Left ventricle myocardium inferior (tissue), 1 donor: ENCODE measurements at regions of chr1 and their contacts with region 1.

Region 1: GRCh38 chr1:205273551-205273982 is 45.8 kb downstream of the TMCC2 start:
- DNase-seq: peak; percentile 83
- H3K4me3 ChIP-seq: no peak overlapping the region
- H3K27ac ChIP-seq: no peak overlapping the region
- H3K4me1 ChIP-seq: peaks cover 35% of the 10 kb centered on the region
- H3K27me3 ChIP-seq: no peaks in the 10 kb centered on the region
- CTCF ChIP-seq: peak; percentile 100

Region 2: DNA sequence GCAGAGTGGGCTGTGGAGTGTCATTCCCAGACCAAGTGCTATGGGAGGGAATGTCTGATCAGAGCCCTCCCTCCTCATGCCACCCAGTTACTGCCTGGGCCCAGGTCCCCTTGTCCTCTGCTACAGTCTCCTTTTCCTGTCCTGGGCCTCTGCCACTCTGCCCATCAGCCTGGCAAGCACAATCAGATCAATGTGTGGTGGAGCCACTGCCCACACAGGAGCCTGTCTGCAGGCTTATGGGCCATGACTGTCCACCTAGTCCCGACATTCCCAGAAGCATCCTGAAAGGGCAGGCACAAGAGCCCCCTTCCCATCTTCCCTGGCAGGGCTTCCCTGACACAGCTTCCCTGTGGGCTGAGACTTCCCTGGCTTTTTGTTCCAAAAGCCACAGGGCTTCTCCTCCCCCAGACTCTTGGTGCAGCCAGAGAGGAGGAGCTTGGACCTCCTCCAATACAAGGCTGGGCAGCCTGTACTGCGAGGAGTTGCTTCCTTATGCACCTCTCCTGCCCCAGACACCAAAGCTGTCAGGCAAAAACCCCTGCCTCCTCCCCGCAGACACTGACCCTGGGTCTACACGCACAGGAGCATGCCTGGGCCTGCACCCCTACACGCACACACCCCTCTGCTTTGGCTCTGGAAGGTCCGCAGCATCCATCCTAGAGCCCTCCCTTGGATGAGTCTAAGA is 259.7 kb before region 1 on chr1:
- intact Hi-C with region 1: no loop called
- DNase-seq: peak; percentile 35
- H3K4me3 ChIP-seq: no peak overlapping the region
- H3K27ac ChIP-seq: no peak overlapping the region
- H3K4me1 ChIP-seq: peaks cover 12% of the 10 kb centered on the region
- H3K27me3 ChIP-seq: peaks cover 25% of the 10 kb centered on the region
- CTCF ChIP-seq: no peak

Region 3: GRCh38 chr1:205211169-205211838 is 62.3 kb before region 1 on chr1 and contains the start of gene DSTYK:
- intact Hi-C with region 1: no loop called
- DNase-seq: peak; percentile 93
- H3K4me3 ChIP-seq: peak within 1 kb of the TSS; percentile 99
- H3K27ac ChIP-seq: peak within 1 kb of the TSS; percentile 97
- H3K4me1 ChIP-seq: peaks cover 31% of the 10 kb centered on the region
- H3K27me3 ChIP-seq: peaks cover 5% of the 10 kb centered on the region
- CTCF ChIP-seq: peak; percentile 13
- total RNA-seq, gene DSTYK: 6.3 TPM

Region 4: GRCh38 chr1:205227584-205228006 is 46.0 kb before region 1 on chr1 and contains the start of gene TMCC2:
- intact Hi-C with region 1: no loop called
- DNase-seq: peak; percentile 91
- H3K4me3 ChIP-seq: peak within 1 kb of the TSS; percentile 77
- H3K27ac ChIP-seq: peak within 1 kb of the TSS; percentile 35
- H3K4me1 ChIP-seq: peaks cover 25% of the 10 kb centered on the region
- H3K27me3 ChIP-seq: peaks cover 7% of the 10 kb centered on the region
- CTCF ChIP-seq: no peak
- total RNA-seq, gene TMCC2: 2.5 TPM

Region 5: DNA sequence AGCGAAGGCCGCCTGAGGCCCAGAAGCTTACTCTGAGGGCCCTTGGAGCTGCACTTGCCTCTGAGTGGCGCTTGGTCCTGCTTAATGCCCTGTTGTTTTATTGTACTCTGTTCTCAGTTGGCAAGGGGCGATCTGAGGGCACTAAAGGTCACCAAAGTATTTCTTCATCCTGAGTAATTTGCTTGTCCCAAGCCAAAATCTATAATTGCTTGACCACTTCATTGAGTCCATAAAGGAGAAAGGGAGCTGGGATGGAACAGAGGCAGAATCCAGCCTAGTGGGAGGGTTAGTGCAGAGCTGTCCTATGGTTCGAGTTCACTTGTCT is 48.4 kb after region 1 on chr1:
- intact Hi-C with region 1: loop called (anchors 2 kb)
- DNase-seq: no peak
- H3K4me3 ChIP-seq: peak overlapping the region; percentile 80
- H3K27ac ChIP-seq: peak overlapping the region; percentile 82
- H3K4me1 ChIP-seq: peaks cover 54% of the 10 kb centered on the region
- H3K27me3 ChIP-seq: peaks cover 9% of the 10 kb centered on the region
- CTCF ChIP-seq: no peak